ENCODE measurements at regions of chr10 and their contacts with region 1.

Region 1: GRCh38 chr10:60722623-60723022 is 55.7 kb upstream of the CDK1 start:
- DNase-seq: no peak
- H3K4me3 ChIP-seq: no peak overlapping the region
- CTCF ChIP-seq: no peak

Region 2: GRCh38 chr10:60684807-60685206 is 37.8 kb before region 1 on chr10:
- in situ Hi-C with region 1: loop called (anchors 5 kb)
- DNase-seq: no peak
- H3K4me3 ChIP-seq: no peak overlapping the region
- CTCF ChIP-seq: no peak

Region 3: DNA sequence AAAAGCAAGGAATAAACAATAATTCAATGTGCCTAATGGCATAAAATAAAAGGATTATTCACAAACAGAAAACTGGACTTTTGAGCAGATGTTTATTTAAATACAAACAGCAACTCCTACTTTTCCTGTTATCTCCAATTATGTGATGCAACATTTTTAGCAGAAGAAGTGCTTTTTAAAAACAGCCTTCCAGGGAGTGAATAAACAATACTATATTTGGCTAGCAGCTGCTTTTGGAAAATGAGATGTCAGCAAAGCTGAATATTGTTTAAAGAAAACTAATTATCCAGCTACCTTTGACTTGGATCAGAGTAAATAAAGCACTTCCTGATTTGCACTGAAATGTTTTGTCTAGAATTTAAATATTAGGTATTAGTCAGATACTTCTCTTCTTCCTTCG is 78.9 kb after region 1 on chr10:
- in situ Hi-C with region 1: no loop called
- DNase-seq: no peak
- H3K4me3 ChIP-seq: no peak overlapping the region
- CTCF ChIP-seq: no peak